Left lung (tissue), 14 donors: ENCODE measurements at regions of chr19 and their contacts with region 1.

Region 1: DNA sequence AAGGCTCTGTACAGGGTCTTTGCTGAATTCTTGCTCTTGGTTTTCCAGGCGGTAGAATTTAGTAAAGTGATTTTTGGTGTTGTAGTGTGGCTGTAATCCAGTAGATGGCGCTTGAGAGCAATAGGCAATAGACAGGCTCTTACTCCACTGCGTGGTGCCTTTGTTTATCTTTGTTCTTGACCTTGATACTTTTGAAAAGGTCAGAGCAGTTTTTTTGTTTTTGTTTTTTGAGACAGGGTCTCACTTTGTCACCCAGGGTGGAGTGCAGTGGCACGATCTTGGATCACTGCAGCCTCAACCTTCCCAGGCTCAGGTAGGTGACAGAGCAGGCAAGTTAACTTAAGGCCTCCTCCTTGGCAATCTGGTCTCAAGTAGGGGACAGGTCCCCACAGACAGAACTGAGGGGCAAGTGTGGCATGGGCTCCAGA is 12.2 kb upstream of the LILRA5 start:
- DNase-seq: peak in 1 of 4 donors; percentile 49
- ATAC-seq: peak; percentile 91
- H3K4me3 ChIP-seq: no peak overlapping the region
- H3K27ac ChIP-seq: no peak overlapping the region
- H3K4me1 ChIP-seq: peaks cover 0 to 6% of the 10 kb centered on the region in 2 donors
- H3K27me3 ChIP-seq: peaks cover 4 to 39% of the 10 kb centered on the region in 2 donors
- CTCF ChIP-seq: peak; percentile 78 to 89

Region 2: DNA sequence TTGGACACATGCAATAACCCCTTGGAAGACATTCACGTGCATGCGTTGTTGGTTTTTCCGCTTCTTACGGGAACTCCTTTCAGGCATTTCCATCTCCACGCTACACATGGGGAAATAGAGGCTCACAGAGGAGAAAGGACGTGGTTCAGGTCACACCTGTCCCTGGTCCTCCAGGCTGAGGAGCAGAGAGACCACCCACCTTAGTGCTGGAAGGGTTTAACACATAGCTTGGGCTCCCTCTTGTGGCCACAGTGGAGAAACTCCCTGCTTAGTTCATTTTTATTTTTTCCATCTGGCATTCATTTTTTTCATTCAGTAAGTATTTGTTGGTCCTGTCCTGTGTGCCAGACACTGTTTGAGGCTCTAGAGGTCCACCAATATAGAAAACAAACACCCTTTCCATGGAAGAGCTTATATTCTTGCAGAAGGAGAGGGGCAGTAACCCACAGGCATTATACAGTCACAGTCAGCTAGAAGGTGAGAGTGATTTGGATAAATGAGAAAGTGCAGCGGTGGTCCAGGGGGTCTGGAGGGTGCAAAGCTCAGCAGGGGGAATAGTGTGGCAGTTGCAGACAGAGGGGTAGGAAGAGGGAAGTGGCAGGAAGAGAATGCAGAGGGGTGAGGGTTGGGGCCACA is 65.9 kb after region 1 on chr19:
- intact Hi-C with region 1: loop called in 1 of 2 experiments (anchors 10 kb)
- DNase-seq: peak in 2 of 4 donors; percentile 42 to 75
- ATAC-seq: peak; percentile 65
- H3K4me3 ChIP-seq: no peak overlapping the region
- H3K27ac ChIP-seq: no peak overlapping the region
- H3K4me1 ChIP-seq: peaks cover 0 to 45% of the 10 kb centered on the region in 2 donors
- H3K27me3 ChIP-seq: peaks cover 4 to 90% of the 10 kb centered on the region in 2 donors
- CTCF ChIP-seq: peak; percentile 59 to 64